ENCODE measurements at regions of chr5 and their contacts with region 1.

Region 1: DNA sequence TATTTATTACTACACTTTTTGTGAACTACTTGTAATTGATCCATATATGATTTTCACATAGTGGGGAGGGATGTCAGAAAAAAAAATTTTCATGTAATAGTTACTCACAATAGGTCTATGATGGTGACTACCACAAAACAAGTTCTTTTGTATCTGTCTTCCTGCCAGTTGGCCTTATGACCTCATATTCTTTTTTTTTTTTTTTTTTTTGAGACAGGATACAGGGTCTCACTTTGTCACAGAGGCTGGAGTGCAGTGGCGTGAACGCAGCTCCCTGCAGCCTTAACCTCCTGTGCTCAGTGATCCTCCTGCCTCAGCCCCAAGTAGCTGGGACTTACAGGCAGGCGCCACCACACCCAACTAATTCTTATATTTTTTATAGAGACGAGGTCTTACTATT is 10.9 kb downstream of the SEC24A start:
- DNase-seq: no peak
- H3K4me3 ChIP-seq: no peak overlapping the region
- H3K27ac ChIP-seq: no peak overlapping the region
- H3K4me1 ChIP-seq: no peaks in the 10 kb centered on the region
- H3K27me3 ChIP-seq: no peaks in the 10 kb centered on the region
- CTCF ChIP-seq: no peak

Region 2: DNA sequence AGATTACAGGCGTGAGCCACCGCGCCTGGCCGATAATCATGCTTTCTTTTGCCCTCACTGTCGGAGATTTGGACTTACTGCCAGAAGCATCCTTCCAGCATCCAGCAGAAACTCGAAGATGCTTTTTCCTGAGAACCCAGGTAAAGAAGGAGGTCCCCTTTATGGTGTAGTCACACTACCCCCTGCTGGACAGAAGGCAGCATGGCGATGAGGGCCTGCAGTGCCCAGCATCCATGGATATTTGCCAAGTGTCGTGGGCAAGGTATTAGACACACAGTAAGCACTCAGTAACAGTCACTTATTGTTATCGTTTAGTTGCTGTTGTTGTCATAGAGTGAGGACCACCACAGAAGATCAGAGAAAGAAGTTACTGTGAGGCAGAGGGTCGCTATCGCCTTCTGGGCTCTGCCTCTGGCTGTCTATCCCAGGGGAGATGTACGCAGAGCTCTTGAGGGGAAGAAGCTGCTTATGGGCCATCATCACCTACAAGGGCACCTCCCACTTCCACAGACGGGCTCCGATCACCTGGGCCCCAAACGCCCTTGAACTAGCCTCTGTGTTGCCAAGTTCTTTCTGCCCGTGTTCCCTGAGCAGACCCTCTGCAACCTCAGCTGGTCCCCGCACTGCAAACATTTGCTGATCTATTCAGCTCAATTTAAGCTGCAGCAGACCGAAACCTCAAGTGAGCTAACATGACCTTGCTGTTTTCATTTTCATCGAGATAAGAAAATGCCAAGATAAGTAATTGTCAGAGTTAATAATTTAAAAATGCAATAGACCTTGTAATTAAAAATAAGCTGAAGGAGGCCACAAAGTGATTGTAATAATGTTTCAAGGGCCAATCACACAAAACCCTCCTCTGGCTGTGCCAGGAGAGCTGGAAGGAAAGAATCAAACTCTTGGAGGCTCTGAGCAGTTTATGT is 714.9 kb before region 1 on chr5:
- CTCF ChIA-PET with region 1: interaction called, 19 read pairs
- POLR2A ChIA-PET with region 1: no interaction called
- intact Hi-C with region 1: no loop called
- DNase-seq: peak; percentile 41 to 70
- H3K4me3 ChIP-seq: no peak overlapping the region
- H3K27ac ChIP-seq: no peak overlapping the region
- H3K4me1 ChIP-seq: peaks cover 28% of the 10 kb centered on the region
- H3K27me3 ChIP-seq: no peaks in the 10 kb centered on the region
- CTCF ChIP-seq: peak; percentile 91

Region 3: DNA sequence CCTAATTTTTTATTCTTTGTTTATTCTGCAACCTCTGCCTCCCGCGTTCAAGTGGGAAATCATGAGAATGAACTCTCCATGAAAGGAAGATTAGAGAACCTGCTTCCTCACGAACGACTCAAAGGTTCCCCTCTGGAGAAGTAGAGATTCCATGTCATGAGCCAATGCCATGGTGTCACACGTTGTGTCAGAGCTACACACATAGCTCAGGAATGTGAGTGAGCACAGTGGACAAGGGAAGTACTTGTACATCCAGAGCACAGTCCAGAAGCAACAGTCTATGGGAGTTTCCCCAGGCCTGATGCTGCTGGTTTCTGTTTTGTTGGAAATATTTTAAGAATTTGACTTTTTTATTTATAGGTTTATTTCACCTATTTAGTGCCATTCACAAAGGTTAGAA is 406.8 kb before region 1 on chr5:
- CTCF ChIA-PET with region 1: no interaction called
- POLR2A ChIA-PET with region 1: no interaction called
- intact Hi-C with region 1: no loop called
- DNase-seq: peak; percentile 38 to 85
- H3K4me3 ChIP-seq: no peak overlapping the region
- H3K27ac ChIP-seq: peak overlapping the region; percentile 67
- H3K4me1 ChIP-seq: peaks cover 42% of the 10 kb centered on the region
- H3K27me3 ChIP-seq: no peaks in the 10 kb centered on the region
- CTCF ChIP-seq: no peak

Region 4: GRCh38 chr5:134758504-134759341 is 99.3 kb after region 1 on chr5 and contains the start of gene DDX46:
- CTCF ChIA-PET with region 1: no interaction called
- POLR2A ChIA-PET with region 1: no interaction called
- intact Hi-C with region 1: no loop called
- DNase-seq: peak; percentile 84 to 93
- H3K4me3 ChIP-seq: peak within 1 kb of the TSS; percentile 97
- H3K27ac ChIP-seq: no peak within 1 kb of the TSS; the same call in 1 of the 2 replicates
- H3K4me1 ChIP-seq: peaks cover 17% of the 10 kb centered on the region
- H3K27me3 ChIP-seq: no peaks in the 10 kb centered on the region
- CTCF ChIP-seq: peak; percentile 72
- total RNA-seq, gene DDX46: 76.5 and 79.8 TPM in 2 replicates

Region 5: DNA sequence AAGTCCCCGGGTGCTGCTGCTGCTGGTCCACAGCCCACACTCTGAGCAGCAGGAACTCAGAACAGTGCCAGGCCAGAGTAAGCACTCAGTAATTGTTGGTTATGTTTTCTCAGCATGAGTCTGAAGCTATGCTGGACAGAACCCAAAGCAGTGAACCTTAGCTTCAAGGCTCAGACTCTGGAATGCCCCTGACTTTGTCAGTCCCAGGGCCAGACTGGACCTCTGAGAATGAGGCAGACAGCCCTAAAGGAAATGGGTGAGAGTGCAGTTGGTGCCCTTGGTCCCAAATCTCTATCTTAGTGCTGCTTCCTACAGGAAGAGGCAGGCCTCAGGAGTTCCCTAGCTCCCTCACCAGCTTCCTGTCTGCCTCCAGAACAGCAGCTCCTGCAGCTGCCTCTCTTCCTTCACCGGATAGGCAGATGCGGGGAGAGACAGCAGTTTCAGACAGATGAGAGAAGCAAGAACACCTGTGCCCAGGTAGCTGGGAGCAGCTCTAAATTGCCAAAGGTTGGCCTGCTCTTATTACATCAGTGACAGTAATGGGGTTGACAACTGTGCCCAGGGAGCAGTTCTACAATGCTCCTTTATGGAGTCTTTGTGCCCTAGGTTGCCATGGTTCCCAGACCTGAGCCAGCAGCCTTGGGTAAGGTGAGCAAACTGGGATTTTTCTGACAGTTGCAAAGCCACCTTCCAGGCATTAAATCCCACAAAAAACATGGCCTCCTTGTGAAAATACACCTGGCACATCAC is 1001.5 kb after region 1 on chr5:
- CTCF ChIA-PET with region 1: interaction called, 10 read pairs
- POLR2A ChIA-PET with region 1: no interaction called
- intact Hi-C with region 1: no loop called
- DNase-seq: no peak
- H3K4me3 ChIP-seq: no peak overlapping the region
- H3K27ac ChIP-seq: no peak overlapping the region
- H3K4me1 ChIP-seq: no peaks in the 10 kb centered on the region
- H3K27me3 ChIP-seq: peaks cover 51% of the 10 kb centered on the region
- CTCF ChIP-seq: no peak